ENCODE measurements at regions of chr9 and their contacts with region 1.

Region 1: DNA sequence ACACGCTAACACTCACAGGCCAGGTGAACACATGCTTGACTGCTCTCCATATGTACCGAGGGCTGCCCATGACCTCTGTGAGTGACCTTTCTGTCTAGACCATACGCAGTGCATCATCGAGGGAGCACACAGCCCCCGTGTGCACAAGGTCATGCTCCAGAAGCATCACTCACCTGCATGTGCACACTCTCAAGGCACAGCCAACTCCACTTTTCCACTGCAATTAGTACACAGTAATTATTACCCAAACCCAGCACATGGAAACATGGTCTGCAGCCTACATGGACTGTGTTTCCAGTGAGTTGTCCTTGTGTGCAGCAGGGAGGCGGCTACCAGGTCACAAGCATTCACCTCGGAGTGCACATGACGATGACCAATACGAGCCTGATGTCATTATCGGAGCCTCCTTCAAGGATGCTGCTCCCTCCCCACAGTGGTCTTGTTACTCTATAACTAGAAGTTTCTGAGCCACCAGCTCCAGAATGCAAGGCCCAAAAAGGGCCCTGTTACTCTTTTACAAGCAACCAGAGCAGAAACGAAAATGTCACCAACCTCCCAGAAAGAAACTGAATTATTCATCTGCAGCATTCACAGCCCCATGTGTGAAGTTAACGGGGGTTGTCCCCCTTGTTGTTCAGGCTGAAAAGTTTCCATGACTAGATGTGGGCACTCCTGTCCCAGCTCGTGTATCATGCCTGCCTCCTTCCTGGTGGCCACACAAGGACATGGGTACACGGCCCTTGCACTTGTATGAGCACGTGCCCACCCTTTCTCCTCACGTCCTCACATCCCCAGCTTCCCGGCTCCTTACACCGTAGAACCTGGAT is 31.2 kb downstream of the SEMA4D start:
- DNase-seq: peak; percentile 86
- H3K4me3 Mint-ChIP-seq: peak overlapping the region; percentile 38
- H3K27ac Mint-ChIP-seq: peak overlapping the region; percentile 97
- H3K4me1 Mint-ChIP-seq: peaks cover 96% of the 10 kb centered on the region
- H3K27me3 Mint-ChIP-seq: no peaks in the 10 kb centered on the region

Region 2: GRCh38 chr9:89410641-89411350 is 55.9 kb before region 1 on chr9:
- CTCF ChIA-PET with region 1: interaction called, 6 read pairs
- intact Hi-C with region 1: loop called (anchors 1 kb)
- DNase-seq: peak; percentile 85
- H3K4me3 Mint-ChIP-seq: peak overlapping the region; percentile 39
- H3K27ac Mint-ChIP-seq: peak overlapping the region; percentile 89
- H3K4me1 Mint-ChIP-seq: peaks cover 86% of the 10 kb centered on the region
- H3K27me3 Mint-ChIP-seq: no peaks in the 10 kb centered on the region

Region 3: GRCh38 chr9:89448381-89448780 is 18.3 kb before region 1 on chr9:
- CTCF ChIA-PET with region 1: no interaction called
- intact Hi-C with region 1: loop called (anchors 1 kb)
- DNase-seq: peak; percentile 66
- H3K4me3 Mint-ChIP-seq: no peak overlapping the region
- H3K27ac Mint-ChIP-seq: peak overlapping the region; percentile 85
- H3K4me1 Mint-ChIP-seq: peaks cover 92% of the 10 kb centered on the region
- H3K27me3 Mint-ChIP-seq: no peaks in the 10 kb centered on the region

Region 4: GRCh38 chr9:89489548-89490530 is 23.2 kb after region 1 on chr9:
- CTCF ChIA-PET with region 1: interaction called, 5 read pairs
- intact Hi-C with region 1: loop called (anchors 1 kb)
- DNase-seq: no peak
- H3K4me3 Mint-ChIP-seq: peak overlapping the region; percentile 31
- H3K27ac Mint-ChIP-seq: peak overlapping the region; percentile 83
- H3K4me1 Mint-ChIP-seq: peaks cover 94% of the 10 kb centered on the region
- H3K27me3 Mint-ChIP-seq: no peaks in the 10 kb centered on the region

Region 5: GRCh38 chr9:89529243-89530035 is 62.8 kb after region 1 on chr9:
- CTCF ChIA-PET with region 1: no interaction called
- intact Hi-C with region 1: loop called (anchors 1 kb)
- DNase-seq: peak; percentile 37
- H3K4me3 Mint-ChIP-seq: peak overlapping the region; percentile 8
- H3K27ac Mint-ChIP-seq: peak overlapping the region; percentile 16
- H3K4me1 Mint-ChIP-seq: peaks cover 94% of the 10 kb centered on the region
- H3K27me3 Mint-ChIP-seq: no peaks in the 10 kb centered on the region

Measured in activated naive CD4-positive, alpha-beta T cell treated with anti-CD3 and anti-CD28 coated beads for 36 hours (primary cell).